OCI-LY7 (cell line): ENCODE measurements at regions of chr12 and their contacts with region 1.

Region 1: DNA sequence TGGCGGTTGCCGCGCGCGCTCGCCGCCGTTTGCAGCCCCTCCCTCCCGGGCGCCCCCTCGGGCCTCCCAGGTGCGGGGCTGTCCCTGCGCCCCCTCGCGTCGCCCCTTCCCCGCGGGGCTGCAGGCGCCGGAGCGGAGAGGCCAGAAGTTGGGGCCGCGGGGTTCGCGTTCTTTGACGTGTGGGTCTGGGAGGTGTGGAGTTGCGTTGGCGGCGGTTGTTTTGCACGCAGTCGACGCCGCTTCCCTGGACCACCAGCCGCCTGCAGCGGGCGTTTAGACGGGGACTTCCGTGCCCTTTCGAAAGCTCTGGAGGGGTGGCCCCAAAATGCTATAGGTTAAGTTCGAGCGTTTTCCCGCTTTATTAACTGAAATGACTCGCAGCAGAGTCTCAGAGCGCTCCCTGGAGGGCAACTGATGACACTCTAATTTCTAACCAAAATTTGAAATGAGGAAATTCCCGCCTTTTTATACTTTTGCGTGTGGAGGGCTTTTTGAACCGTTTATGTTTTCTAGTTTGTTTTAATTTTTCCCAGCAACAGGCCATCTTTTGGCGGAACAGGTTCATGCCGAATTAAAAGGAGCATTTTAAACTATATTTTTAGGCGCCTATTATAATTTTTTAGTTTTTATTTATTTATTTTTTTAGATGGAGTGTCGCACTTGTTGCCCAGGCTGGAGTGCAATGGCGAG is 939 bp downstream of the TMPO start:
- DNase-seq: peak; percentile 98
- H3K4me3 ChIP-seq: peak overlapping the region; percentile 77
- H3K27ac ChIP-seq: peak overlapping the region; percentile 99
- H3K4me1 ChIP-seq: peaks cover 37% of the 10 kb centered on the region
- CTCF ChIP-seq: peak; percentile 86

Region 2: DNA sequence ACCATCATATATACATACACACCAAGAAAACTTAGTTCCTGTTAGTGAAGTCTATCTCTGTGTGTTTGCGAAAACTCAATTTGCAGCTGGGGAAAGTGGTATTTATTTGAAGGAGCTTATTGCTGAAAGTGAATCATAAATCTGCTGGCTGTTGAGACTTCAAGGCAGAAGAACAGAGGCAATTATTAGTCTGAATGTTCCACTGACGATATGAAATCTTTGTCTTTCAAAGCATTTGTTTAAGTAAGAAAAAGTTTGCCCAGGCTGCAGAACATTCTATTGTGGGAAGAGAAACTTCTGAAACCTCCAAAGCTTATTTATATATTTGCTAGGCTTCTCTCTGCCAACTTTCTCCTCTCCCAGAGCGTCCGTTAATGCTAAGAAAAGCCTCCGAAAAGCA is 256.6 kb before region 1 on chr12:
- CTCF ChIA-PET with region 1: no interaction called
- POLR2A ChIA-PET with region 1: no interaction called
- intact Hi-C with region 1: loop called (anchors 5 kb)
- DNase-seq: peak; percentile 80
- H3K4me3 ChIP-seq: peak overlapping the region; percentile 52
- H3K27ac ChIP-seq: peak overlapping the region; percentile 93
- H3K4me1 ChIP-seq: peaks cover 90% of the 10 kb centered on the region
- CTCF ChIP-seq: no peak

Region 3: DNA sequence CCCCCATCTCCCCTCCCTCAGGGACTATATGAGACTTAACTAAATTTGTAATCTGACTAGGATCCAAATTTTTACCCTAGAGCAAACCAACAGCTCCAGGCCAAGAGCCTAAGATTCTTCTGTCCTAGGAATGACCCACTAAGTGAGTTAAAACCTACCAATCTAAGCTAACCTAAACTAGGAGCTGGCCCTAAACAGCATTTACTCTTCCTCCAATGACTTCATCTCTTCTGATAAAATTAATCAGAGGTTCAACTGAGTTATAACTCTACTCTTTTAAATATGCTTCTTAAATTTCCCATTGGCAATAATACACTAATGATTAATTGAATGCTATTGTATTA is 40.8 kb before region 1 on chr12:
- CTCF ChIA-PET with region 1: no interaction called
- POLR2A ChIA-PET with region 1: no interaction called
- intact Hi-C with region 1: no loop called
- DNase-seq: no peak
- H3K4me3 ChIP-seq: no peak overlapping the region
- H3K27ac ChIP-seq: no peak overlapping the region
- H3K4me1 ChIP-seq: no peaks in the 10 kb centered on the region
- CTCF ChIP-seq: no peak

Region 4: GRCh38 chr12:98490501-98491453 is 25.6 kb before region 1 on chr12:
- CTCF ChIA-PET with region 1: interaction called, 5 read pairs
- POLR2A ChIA-PET with region 1: interaction called, 64 read pairs
- intact Hi-C with region 1: loop called (anchors 1 kb)
- DNase-seq: peak; percentile 89
- H3K4me3 ChIP-seq: no peak overlapping the region
- H3K27ac ChIP-seq: peak overlapping the region; percentile 56
- H3K4me1 ChIP-seq: peaks cover 13% of the 10 kb centered on the region
- CTCF ChIP-seq: peak; percentile 97

Region 5: GRCh38 chr12:98593351-98594049 is 77.2 kb after region 1 on chr12 and contains the start of gene SLC25A3:
- CTCF ChIA-PET with region 1: interaction called, 3 read pairs
- POLR2A ChIA-PET with region 1: interaction called, 4 read pairs
- intact Hi-C with region 1: loop called (anchors 1 kb)
- DNase-seq: peak; percentile 99
- H3K4me3 ChIP-seq: peak within 1 kb of the TSS; percentile 92
- H3K27ac ChIP-seq: peak within 1 kb of the TSS; percentile 60
- H3K4me1 ChIP-seq: peaks cover 17% of the 10 kb centered on the region
- CTCF ChIP-seq: no peak
- total RNA-seq, gene SLC25A3: 332 and 355 TPM in 2 replicates

Region 6: GRCh38 chr12:99386907-99387306 is 870.6 kb after region 1 on chr12:
- CTCF ChIA-PET with region 1: no interaction called
- POLR2A ChIA-PET with region 1: no interaction called
- intact Hi-C with region 1: loop called (anchors 5 kb)
- DNase-seq: peak; percentile 67
- H3K4me3 ChIP-seq: no peak overlapping the region
- H3K27ac ChIP-seq: no peak overlapping the region
- H3K4me1 ChIP-seq: peaks cover 78% of the 10 kb centered on the region
- CTCF ChIP-seq: peak; percentile 76